Heart right ventricle (tissue), 16 donors: ENCODE measurements at regions of chr3 and their contacts with region 1.

Region 1: GRCh38 chr3:25094932-25095685 is 333.0 kb upstream of the RARB start:
- DNase-seq: no peak
- ATAC-seq: no peak
- H3K4me3 ChIP-seq: no peak overlapping the region
- H3K27ac ChIP-seq: no peak overlapping the region
- H3K4me1 ChIP-seq: peaks cover 0 to 1% (median 0%) of the 10 kb centered on the region in 9 donors
- H3K27me3 ChIP-seq: no peaks in the 10 kb centered on the region
- CTCF ChIP-seq: peak in 7 of 9 donors; percentile 11 to 42 (median 29)

Region 2: DNA sequence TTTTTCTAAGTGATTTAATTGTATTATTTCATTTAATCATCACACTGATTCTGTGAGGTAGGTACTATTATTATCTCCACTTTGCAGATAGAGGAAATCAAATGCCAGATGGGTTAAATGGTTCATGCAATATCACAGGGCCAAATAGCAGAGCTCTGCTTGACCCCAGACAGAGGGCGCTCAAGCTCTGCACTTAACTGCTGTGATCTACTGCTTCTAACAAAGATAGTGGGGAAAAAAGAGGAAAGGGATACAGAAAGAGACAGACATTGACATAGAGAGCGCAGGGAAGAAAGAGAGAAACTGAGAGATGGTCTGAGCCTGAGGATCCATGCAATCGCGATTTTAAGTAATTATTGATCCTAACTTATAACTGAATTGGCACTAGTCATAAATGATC is 321.3 kb before region 1 on chr3:
- intact Hi-C with region 1: loop called in 2 of 10 experiments (anchors 5 to 10 kb)
- DNase-seq: peak; percentile 20 to 41
- ATAC-seq: peak; percentile 41 to 75 (median 60)
- H3K4me3 ChIP-seq: no peak overlapping the region
- H3K27ac ChIP-seq: no peak overlapping the region
- H3K4me1 ChIP-seq: no peaks in the 10 kb centered on the region
- H3K27me3 ChIP-seq: no peaks in the 10 kb centered on the region
- CTCF ChIP-seq: peak; percentile 57 to 86 (median 77)

Region 3: GRCh38 chr3:24952388-24952787 is 142.7 kb before region 1 on chr3:
- intact Hi-C with region 1: loop called in 1 of 10 experiments (anchors 10 kb)
- DNase-seq: no peak
- ATAC-seq: no peak
- H3K4me3 ChIP-seq: no peak overlapping the region
- H3K27ac ChIP-seq: no peak overlapping the region
- H3K4me1 ChIP-seq: peaks cover 0 to 9% (median 4%) of the 10 kb centered on the region in 9 donors
- H3K27me3 ChIP-seq: peaks cover 0 to 3% (median 0%) of the 10 kb centered on the region in 7 donors
- CTCF ChIP-seq: no peak

Region 4: GRCh38 chr3:24963762-24964625 is 131.1 kb before region 1 on chr3:
- intact Hi-C with region 1: loop called in 5 of 10 experiments (anchors 5 to 10 kb)
- DNase-seq: no peak
- ATAC-seq: peak in 1 of 8 donors; percentile 61
- H3K4me3 ChIP-seq: no peak overlapping the region
- H3K27ac ChIP-seq: no peak overlapping the region
- H3K4me1 ChIP-seq: no peaks in the 10 kb centered on the region
- H3K27me3 ChIP-seq: no peaks in the 10 kb centered on the region
- CTCF ChIP-seq: peak in 8 of 9 donors; percentile 44 to 71 (median 64)